ENCODE measurements at regions of chr1 and their contacts with region 1.

Region 1: DNA sequence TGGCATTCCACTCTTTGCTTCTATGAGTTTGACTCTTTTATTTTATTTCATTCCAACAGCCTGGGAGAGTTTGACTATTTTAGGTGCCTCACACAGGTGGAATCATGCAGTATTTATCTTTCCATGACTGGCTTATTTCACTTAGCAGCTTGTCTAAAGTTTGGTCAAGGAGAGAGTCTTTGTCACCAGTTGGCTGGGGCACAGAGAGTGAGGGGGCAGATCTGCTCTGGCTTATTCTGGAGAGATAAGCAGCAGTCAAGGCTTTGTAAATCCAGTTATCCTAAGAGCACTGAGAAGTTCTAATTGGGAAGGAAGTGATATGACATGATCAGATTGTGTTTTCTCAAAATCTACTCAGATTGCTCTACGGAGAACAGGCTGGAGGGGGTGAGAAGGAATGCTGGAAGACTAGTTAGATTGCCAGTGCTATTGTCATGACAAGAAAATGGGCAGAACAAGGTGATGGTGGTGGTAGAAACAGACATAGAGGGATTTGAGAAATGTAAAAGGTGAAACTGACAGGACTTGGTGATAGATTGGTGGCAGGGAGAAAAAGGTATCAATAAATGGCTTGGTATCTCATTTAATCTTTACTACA is 12.2 kb upstream of the CTTNBP2NL start:
- DNase-seq: no peak
- H3K4me3 ChIP-seq: no peak overlapping the region
- H3K27ac ChIP-seq: no peak overlapping the region
- H3K4me1 ChIP-seq: peaks cover 5% of the 10 kb centered on the region
- H3K27me3 ChIP-seq: no peaks in the 10 kb centered on the region
- CTCF ChIP-seq: no peak

Region 2: GRCh38 chr1:112395821-112396652 is 12.2 kb after region 1 on chr1 and contains the start of gene CTTNBP2NL:
- CTCF ChIA-PET with region 1: no interaction called
- POLR2A ChIA-PET with region 1: interaction called, 12 read pairs
- intact Hi-C with region 1: no loop called
- DNase-seq: peak; percentile 99
- H3K4me3 ChIP-seq: peak within 1 kb of the TSS; percentile 99
- H3K27ac ChIP-seq: peak within 1 kb of the TSS; percentile 82
- H3K4me1 ChIP-seq: peaks cover 41% of the 10 kb centered on the region
- H3K27me3 ChIP-seq: no peaks in the 10 kb centered on the region
- CTCF ChIP-seq: no peak
- total RNA-seq, gene CTTNBP2NL: 28.1 and 32.7 TPM in 2 replicates

Region 3: DNA sequence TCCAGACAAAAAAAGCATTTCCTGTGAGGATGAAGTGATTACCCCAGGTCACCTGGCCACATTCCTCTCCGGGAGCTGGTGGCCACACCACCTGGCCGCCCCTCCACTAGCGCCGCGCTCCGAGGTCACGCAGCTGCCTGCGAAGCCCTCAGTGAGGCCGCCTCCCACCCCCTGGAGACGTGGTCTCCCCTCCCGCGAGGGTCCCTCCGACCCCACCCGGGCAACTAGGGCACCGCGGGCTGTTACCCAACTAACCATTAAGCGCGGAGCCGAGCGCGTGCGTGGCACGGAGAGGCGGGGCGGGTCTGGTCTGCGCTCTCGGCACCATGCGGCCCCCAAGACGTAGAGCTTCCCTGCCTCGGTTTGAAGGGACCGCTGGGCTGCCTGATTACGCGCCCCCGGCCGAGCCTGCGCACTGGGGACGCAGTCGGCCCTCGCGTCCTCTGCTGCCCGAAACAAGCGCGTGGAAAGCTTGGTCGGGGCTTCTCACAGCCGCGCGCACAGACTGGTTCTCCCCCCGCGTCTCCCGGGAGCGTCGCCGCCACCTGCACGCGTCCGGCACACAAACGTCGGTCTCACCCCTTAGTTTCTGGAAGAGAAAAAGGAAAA is 465.7 kb after region 1 on chr1:
- CTCF ChIA-PET with region 1: no interaction called
- POLR2A ChIA-PET with region 1: no interaction called
- intact Hi-C with region 1: no loop called
- DNase-seq: peak; percentile 52
- H3K4me3 ChIP-seq: peak overlapping the region; percentile 43
- H3K27ac ChIP-seq: no peak overlapping the region
- H3K4me1 ChIP-seq: no peaks in the 10 kb centered on the region
- H3K27me3 ChIP-seq: peaks cover 36% of the 10 kb centered on the region
- CTCF ChIP-seq: no peak

Measured in A673 (cell line).